A549 (cell line): ENCODE measurements at regions of chr5 and their contacts with region 1.

Region 1: DNA sequence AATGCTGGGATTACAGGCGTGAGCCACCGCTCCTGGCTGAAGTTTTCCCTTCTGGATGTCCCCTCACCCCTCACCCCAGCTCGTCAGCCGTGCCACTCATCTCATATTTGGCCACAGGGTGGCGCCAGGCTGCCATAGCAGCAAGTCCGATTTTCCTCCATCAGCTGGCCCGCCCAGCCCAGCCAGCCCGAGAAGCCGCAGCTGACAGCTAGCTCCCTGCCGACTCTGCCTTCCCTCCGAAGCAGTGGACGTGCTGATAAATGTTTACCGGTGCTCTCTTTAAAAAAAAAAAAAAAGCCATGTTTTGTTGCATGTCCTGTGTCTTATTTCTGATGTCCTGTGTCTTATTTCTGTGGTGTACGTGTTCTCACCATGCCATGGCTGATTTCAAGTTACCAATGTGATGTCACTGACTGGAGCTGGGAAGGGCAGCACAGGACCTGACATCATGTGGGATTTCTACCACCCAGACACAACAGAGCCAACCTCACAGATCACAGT is 58.3 kb downstream of the PFDN1 start:
- DNase-seq: peak; percentile 69 to 87
- ATAC-seq: peak; percentile 62 to 82
- H3K4me3 ChIP-seq: no peak overlapping the region
- H3K27ac ChIP-seq: no peak overlapping the region
- H3K4me1 ChIP-seq: peaks cover 29% of the 10 kb centered on the region
- CTCF ChIP-seq: peak; percentile 88
- EP300 ChIP-seq: no peak
- POLR2A ChIP-seq: no peak
- RAD21 ChIP-seq: peak; percentile 95 to 97

Region 2: DNA sequence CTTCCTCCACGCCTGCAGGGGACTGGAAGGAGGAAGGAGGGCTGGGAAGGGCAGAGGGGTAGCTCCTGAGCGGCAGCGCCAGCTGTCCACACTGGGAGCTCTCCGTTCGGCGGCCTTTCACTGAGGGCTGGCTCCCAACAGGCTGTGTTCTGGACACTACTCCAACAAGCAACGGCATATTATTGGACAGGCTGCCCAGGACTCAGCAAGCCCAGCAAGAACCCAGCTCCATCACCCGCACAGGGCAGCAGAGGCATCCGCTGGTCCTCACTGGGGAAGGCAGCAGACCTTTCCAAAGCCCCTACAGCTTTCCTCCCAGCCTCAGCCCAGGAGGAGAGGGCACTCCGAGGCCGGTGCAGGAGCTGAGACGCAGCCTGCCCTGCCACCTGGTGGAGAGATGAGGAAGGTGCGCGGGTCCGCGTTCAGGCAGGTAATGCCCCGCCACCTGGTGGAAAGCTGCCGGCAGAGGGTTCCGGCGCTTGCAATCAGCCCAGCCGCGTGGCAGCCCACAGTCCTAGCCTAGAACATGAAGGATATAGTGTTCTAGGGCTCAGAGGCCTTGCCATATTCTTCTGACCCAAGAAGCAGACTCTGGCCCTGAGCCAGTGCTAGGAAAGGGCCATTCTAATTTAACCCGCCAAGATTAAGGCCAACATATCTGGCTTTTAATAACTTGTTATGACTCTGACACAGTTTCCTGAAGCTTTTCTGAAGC is 275.9 kb before region 1 on chr5:
- CTCF ChIA-PET with region 1: no interaction called
- POLR2A ChIA-PET with region 1: no interaction called
- DNase-seq: peak; percentile 81 to 90
- ATAC-seq: peak; percentile 97 to 99
- H3K4me3 ChIP-seq: no peak overlapping the region
- H3K27ac ChIP-seq: no peak overlapping the region
- H3K4me1 ChIP-seq: no peaks in the 10 kb centered on the region
- CTCF ChIP-seq: peak; percentile 98
- EP300 ChIP-seq: no peak
- POLR2A ChIP-seq: no peak
- RAD21 ChIP-seq: peak; percentile 90 to 94

Region 3: GRCh38 chr5:140178086-140178410 is 66.5 kb before region 1 on chr5:
- CTCF ChIA-PET with region 1: interaction called, 6 read pairs
- POLR2A ChIA-PET with region 1: interaction called, 13 read pairs
- DNase-seq: no peak
- ATAC-seq: no peak
- H3K4me3 ChIP-seq: no peak overlapping the region
- H3K27ac ChIP-seq: no peak overlapping the region
- H3K4me1 ChIP-seq: peaks cover 37% of the 10 kb centered on the region
- CTCF ChIP-seq: no peak
- EP300 ChIP-seq: no peak
- POLR2A ChIP-seq: no peak
- RAD21 ChIP-seq: no peak

Region 4: DNA sequence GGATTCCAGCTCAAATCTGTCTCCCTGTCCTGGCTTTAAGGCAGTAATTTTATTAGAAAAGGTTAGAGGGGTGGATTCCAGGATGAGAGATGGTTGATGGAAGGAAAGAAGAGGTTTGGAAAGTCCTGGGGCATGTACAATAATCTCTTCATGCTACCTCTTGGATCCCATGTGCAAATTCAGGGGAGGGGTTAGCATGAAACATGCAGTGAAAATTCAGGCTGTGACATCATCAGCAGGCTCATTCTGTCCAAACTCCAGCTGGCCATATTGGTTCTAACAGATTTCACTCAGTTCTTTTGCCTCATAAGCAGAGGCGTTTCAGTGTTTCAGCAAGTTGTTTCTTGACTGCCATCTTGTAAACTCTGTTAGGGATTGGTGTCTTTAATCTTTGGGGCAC is 14.2 kb before region 1 on chr5:
- CTCF ChIA-PET with region 1: interaction called, 31 read pairs
- POLR2A ChIA-PET with region 1: no interaction called
- DNase-seq: no peak
- ATAC-seq: no peak
- H3K4me3 ChIP-seq: no peak overlapping the region
- H3K27ac ChIP-seq: no peak overlapping the region
- H3K4me1 ChIP-seq: no peaks in the 10 kb centered on the region
- CTCF ChIP-seq: no peak
- EP300 ChIP-seq: no peak
- POLR2A ChIP-seq: no peak
- RAD21 ChIP-seq: no peak

Region 5: GRCh38 chr5:140293091-140293848 is 48.7 kb after region 1 on chr5:
- CTCF ChIA-PET with region 1: interaction called, 10 read pairs
- POLR2A ChIA-PET with region 1: no interaction called
- DNase-seq: no peak
- ATAC-seq: no peak
- H3K4me3 ChIP-seq: no peak overlapping the region
- H3K27ac ChIP-seq: peak overlapping the region; percentile 39; a peak in 3 of 6 replicates
- H3K4me1 ChIP-seq: peaks cover 68% of the 10 kb centered on the region
- CTCF ChIP-seq: no peak
- EP300 ChIP-seq: no peak
- POLR2A ChIP-seq: no peak
- RAD21 ChIP-seq: no peak

Region 6: GRCh38 chr5:140322751-140323731 is 78.5 kb after region 1 on chr5:
- CTCF ChIA-PET with region 1: interaction called, 14 read pairs
- POLR2A ChIA-PET with region 1: no interaction called
- DNase-seq: peak in 1 of 2 experiments; percentile 47
- ATAC-seq: peak; percentile 67 to 76
- H3K4me3 ChIP-seq: no peak overlapping the region
- H3K27ac ChIP-seq: peak overlapping the region; percentile 66 to 89
- H3K4me1 ChIP-seq: peaks cover 51% of the 10 kb centered on the region
- CTCF ChIP-seq: no peak
- EP300 ChIP-seq: 0 out of 5 replicates have a peak, but pooled peaks of 1 of the 2 experiments have one; percentile 10
- POLR2A ChIP-seq: no peak
- RAD21 ChIP-seq: no peak